Calu3 (cell line): ENCODE measurements at regions of chr19 and their contacts with region 1.

Region 1: GRCh38 chr19:39532233-39533002 is at the start of gene EID2B:
- DNase-seq: peak; percentile 96
- H3K4me3 Mint-ChIP-seq: peak within 1 kb of the TSS; percentile 83
- H3K27ac Mint-ChIP-seq: no peak within 1 kb of the TSS
- H3K4me1 Mint-ChIP-seq: no peaks in the 10 kb centered on the region
- H3K27me3 Mint-ChIP-seq: peaks cover 9% of the 10 kb centered on the region
- CTCF ChIP-seq: peak; percentile 98
- total RNA-seq, gene EID2B: 2.4 and 3.3 TPM in 2 replicates

Region 2: GRCh38 chr19:39390755-39391592 is 141.4 kb before region 1 on chr19 and contains the starts of genes MED29 and PAF1:
- CTCF ChIA-PET with region 1: no interaction called
- intact Hi-C with region 1: loop called (anchors 5 kb)
- DNase-seq: peak; percentile 98
- H3K4me3 Mint-ChIP-seq: peak within 1 kb of the TSS; percentile 96
- H3K27ac Mint-ChIP-seq: peak within 1 kb of the TSS; percentile 95
- H3K4me1 Mint-ChIP-seq: peaks cover 21% of the 10 kb centered on the region
- H3K27me3 Mint-ChIP-seq: no peaks in the 10 kb centered on the region
- CTCF ChIP-seq: no peak
- total RNA-seq, gene MED29: 56.8 and 66.6 TPM in 2 replicates
- total RNA-seq, gene PAF1: 64.3 and 72.7 TPM in 2 replicates

Region 3: GRCh38 chr19:39445265-39446111 is 86.9 kb before region 1 on chr19 and contains the start of gene SUPT5H:
- CTCF ChIA-PET with region 1: interaction called, 9 read pairs
- intact Hi-C with region 1: loop called (anchors 1 kb)
- DNase-seq: peak; percentile 98
- H3K4me3 Mint-ChIP-seq: peak within 1 kb of the TSS; percentile 96
- H3K27ac Mint-ChIP-seq: peak within 1 kb of the TSS; percentile 99
- H3K4me1 Mint-ChIP-seq: peaks cover 16% of the 10 kb centered on the region
- H3K27me3 Mint-ChIP-seq: no peaks in the 10 kb centered on the region
- CTCF ChIP-seq: no peak
- total RNA-seq, gene SUPT5H: 158 and 189 TPM in 2 replicates

Region 4: GRCh38 chr19:39474139-39474622 is 58.2 kb before region 1 on chr19:
- CTCF ChIA-PET with region 1: interaction called, 21 read pairs
- intact Hi-C with region 1: loop called (anchors 2 kb)
- DNase-seq: peak; percentile 80
- H3K4me3 Mint-ChIP-seq: no peak overlapping the region
- H3K27ac Mint-ChIP-seq: peak overlapping the region; percentile 39
- H3K4me1 Mint-ChIP-seq: no peaks in the 10 kb centered on the region
- H3K27me3 Mint-ChIP-seq: no peaks in the 10 kb centered on the region
- CTCF ChIP-seq: peak; percentile 94

Region 5: DNA sequence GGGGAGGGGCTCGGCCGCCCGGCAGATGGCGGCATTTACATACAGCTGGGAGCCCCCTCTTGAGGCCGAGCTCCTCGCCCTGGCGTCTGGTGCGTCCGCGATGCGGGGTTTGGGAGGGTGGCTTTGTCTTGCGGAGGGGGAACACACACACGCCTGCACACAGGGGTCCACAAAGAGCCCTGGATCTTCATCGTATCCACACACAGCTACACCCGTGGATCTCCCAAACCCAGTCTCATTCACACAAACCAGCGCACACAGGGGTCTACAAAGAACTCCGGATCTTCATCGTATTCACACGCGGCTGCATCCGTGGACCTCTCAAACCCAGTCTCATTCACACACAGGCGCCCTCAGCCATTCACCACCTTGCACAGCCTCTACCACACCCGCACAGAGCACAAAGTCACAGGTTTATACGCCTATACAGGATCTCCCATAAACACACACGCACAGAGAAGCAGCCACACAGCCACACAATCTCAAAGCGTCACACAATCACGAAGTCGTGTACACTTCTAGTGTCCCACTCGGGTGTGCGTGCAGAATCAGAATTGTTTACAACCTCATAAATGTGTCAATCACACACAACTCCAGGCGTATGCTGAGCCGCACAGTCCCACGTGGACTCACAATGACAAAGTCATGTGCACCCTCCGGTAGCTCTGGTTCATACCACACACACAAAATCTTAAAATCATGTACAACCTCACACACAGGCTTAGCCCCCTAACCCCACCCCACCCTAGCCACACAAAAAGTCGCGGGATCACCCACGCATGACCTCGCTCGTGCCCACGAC is 34.2 kb before region 1 on chr19:
- CTCF ChIA-PET with region 1: interaction called, 5 read pairs
- intact Hi-C with region 1: loop called (anchors 5 kb)
- DNase-seq: peak; percentile 65
- H3K4me3 Mint-ChIP-seq: peak overlapping the region; percentile 58
- H3K27ac Mint-ChIP-seq: no peak overlapping the region
- H3K4me1 Mint-ChIP-seq: peaks cover 22% of the 10 kb centered on the region
- H3K27me3 Mint-ChIP-seq: peaks cover 69% of the 10 kb centered on the region
- CTCF ChIP-seq: peak; percentile 41

Region 6: GRCh38 chr19:39607558-39607957 is 75.1 kb after region 1 on chr19:
- CTCF ChIA-PET with region 1: no interaction called
- intact Hi-C with region 1: no loop called
- DNase-seq: no peak
- H3K4me3 Mint-ChIP-seq: no peak overlapping the region
- H3K27ac Mint-ChIP-seq: no peak overlapping the region
- H3K4me1 Mint-ChIP-seq: no peaks in the 10 kb centered on the region
- H3K27me3 Mint-ChIP-seq: peaks cover 99% of the 10 kb centered on the region
- CTCF ChIP-seq: no peak